ENCODE measurements at regions of chr22 and their contacts with region 1.

Region 1: DNA sequence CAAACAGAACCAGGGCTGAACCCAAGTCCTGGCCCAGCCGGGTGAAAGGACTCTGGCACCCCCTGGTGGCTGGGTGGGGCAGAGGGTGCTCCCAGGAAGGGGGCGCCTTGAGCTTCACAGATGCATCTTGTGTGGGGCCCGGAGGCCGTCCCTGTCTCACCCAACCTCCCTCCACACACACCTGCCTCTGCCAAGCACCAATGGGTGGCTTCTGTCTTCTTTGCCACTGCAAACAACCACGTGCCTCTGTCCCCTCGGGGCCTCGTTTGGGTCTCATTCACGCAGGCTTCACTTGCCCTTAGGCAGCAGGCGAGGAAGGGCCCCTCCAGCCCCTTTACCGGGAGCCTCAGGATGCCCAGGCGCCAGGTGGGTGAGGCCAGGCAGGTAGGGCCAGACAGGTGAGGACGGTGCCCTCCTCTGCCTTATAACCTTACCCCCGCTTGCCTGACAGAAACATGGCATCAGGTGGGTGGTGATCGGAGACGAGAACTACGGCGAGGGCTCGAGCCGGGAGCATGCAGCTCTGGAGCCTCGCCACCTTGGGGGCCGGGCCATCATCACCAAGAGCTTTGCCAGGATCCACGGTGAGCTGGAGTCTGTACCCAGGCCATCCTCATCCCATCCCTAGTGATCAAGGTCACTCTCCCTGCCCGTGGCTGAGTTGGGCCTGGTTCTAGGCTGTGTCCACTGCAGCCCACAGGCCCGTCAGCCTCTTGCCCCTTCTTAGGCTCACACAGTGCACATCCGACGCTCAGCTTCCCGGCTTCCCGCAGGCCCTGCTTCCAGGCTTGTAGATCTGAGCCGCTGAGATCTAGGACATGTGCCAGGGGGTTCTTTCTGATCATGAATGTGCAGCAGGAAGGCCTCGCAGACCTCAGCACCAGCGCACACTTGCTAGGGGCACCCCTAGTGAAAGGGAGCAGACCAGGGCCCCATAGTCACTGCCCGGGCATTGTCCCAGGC is 17.2 kb downstream of the POLR3H start:
- DNase-seq: peak; percentile 71
- ATAC-seq: peak; percentile 74
- H3K4me3 Mint-ChIP-seq: no peak overlapping the region
- H3K27ac Mint-ChIP-seq: peak overlapping the region; percentile 60
- H3K4me1 Mint-ChIP-seq: peaks cover 13% of the 10 kb centered on the region
- H3K27me3 Mint-ChIP-seq: no peaks in the 10 kb centered on the region

Region 2: GRCh38 chr22:41411021-41411851 is 115.9 kb before region 1 on chr22:
- CTCF ChIA-PET with region 1: interaction called, 129 read pairs
- POLR2A ChIA-PET with region 1: interaction called, 3 read pairs
- DNase-seq: no peak
- ATAC-seq: no peak
- H3K4me3 Mint-ChIP-seq: peak overlapping the region; percentile 33
- H3K27ac Mint-ChIP-seq: peak overlapping the region; percentile 84
- H3K4me1 Mint-ChIP-seq: peaks cover 35% of the 10 kb centered on the region
- H3K27me3 Mint-ChIP-seq: no peaks in the 10 kb centered on the region

Region 3: DNA sequence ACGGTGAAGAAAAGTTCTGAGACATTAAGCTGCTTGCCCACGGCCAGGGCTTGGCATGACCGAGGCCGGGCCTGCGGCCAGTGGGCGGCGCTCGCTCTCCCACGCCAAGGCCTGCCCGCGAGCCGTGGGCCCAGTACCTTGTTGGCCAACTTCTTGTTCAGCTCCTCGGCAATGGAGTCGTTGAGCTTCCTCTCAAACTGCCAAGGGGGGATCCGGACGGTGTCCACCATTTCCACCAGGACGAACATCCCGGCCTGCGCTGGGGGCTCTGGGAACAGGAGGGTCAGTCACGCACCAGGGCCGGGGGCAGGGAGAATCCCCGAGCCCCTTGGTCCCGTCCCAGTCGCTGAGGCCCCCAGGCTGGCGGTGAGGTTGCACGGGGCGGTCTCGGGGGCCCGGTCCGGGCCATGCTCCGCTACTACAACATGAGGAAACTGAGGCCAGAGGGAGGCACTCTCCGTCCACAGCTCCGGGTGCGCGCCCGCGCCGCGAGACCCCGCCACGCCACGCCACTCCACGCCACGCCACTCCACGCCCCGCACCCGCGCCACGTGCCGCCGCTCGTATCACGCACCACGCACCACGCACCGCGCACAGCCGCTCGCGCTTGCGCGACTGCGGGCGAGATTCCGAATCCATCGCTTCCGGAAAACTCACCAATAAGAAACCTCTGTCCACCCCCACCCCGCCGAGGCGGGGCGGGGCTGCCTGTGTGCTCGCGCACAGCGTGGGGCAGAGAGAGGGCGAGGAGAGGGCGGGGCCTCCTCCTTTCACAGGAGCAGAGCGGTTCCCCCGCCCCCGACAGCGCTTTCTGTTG is 16.9 kb after region 1 on chr22 and contains the start of gene POLR3H:
- CTCF ChIA-PET with region 1: interaction called, 13 read pairs
- POLR2A ChIA-PET with region 1: no interaction called
- DNase-seq: peak; percentile 98
- ATAC-seq: peak; percentile 97
- H3K4me3 Mint-ChIP-seq: peak within 1 kb of the TSS; percentile 95
- H3K27ac Mint-ChIP-seq: peak within 1 kb of the TSS; percentile 95
- H3K4me1 Mint-ChIP-seq: peaks cover 34% of the 10 kb centered on the region
- H3K27me3 Mint-ChIP-seq: peaks cover 2% of the 10 kb centered on the region
- total RNA-seq, gene POLR3H: 31.3 to 31.9 TPM

Region 4: GRCh38 chr22:41565403-41566054 is 38.4 kb after region 1 on chr22:
- CTCF ChIA-PET with region 1: no interaction called
- POLR2A ChIA-PET with region 1: no interaction called
- DNase-seq: peak; percentile 45
- ATAC-seq: peak; percentile 72
- H3K4me3 Mint-ChIP-seq: no peak overlapping the region
- H3K27ac Mint-ChIP-seq: no peak overlapping the region
- H3K4me1 Mint-ChIP-seq: peaks cover 4% of the 10 kb centered on the region
- H3K27me3 Mint-ChIP-seq: peaks cover 15% of the 10 kb centered on the region

Region 5: DNA sequence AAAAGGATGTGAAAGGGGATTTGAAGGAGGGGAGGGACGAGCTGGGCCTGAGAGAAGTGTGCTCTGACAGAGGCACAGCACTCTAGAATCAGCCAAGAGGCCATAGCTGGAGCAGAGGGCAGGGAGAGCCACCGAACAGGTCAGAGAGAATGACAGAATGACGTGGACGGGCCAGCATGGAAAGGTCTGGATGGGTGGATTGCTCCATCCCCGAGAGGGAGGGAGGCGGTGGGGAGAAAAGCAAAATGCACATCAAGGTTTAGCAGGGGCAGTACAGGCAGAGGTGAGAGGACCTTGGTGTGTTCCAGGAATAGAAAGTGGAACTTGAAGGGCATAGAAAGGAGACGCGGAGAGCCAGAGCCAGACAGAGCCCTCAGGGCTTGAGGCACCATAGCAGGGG is 55.6 kb after region 1 on chr22:
- CTCF ChIA-PET with region 1: no interaction called
- POLR2A ChIA-PET with region 1: no interaction called
- DNase-seq: no peak
- ATAC-seq: no peak
- H3K4me3 Mint-ChIP-seq: no peak overlapping the region
- H3K27ac Mint-ChIP-seq: peak overlapping the region; percentile 5
- H3K4me1 Mint-ChIP-seq: peaks cover 13% of the 10 kb centered on the region
- H3K27me3 Mint-ChIP-seq: no peaks in the 10 kb centered on the region